Breast epithelium (tissue), 4 donors: ENCODE measurements at regions of chr14 and their contacts with region 1.

Region 1: GRCh38 chr14:90140298-90140955 is 78.6 kb downstream of the KCNK13 start:
- DNase-seq: no peak
- H3K4me3 ChIP-seq: no peak overlapping the region
- H3K27ac ChIP-seq: no peak overlapping the region
- H3K4me1 ChIP-seq: no peaks in the 10 kb centered on the region
- H3K27me3 ChIP-seq: no peaks in the 10 kb centered on the region
- CTCF ChIP-seq: no peak
- POLR2A ChIP-seq: no peak

Region 2: GRCh38 chr14:89207925-89208328 is 932.5 kb before region 1 on chr14:
- intact Hi-C with region 1: loop called (anchors 5 kb)
- DNase-seq: no peak
- H3K4me3 ChIP-seq: no peak overlapping the region
- H3K27ac ChIP-seq: no peak overlapping the region
- H3K4me1 ChIP-seq: no peaks in the 10 kb centered on the region
- H3K27me3 ChIP-seq: no peaks in the 10 kb centered on the region
- CTCF ChIP-seq: no peak
- POLR2A ChIP-seq: no peak

Region 3: GRCh38 chr14:90154110-90154509 is 13.7 kb after region 1 on chr14:
- intact Hi-C with region 1: no loop called
- DNase-seq: no peak
- H3K4me3 ChIP-seq: no peak overlapping the region
- H3K27ac ChIP-seq: no peak overlapping the region
- H3K4me1 ChIP-seq: no peaks in the 10 kb centered on the region
- H3K27me3 ChIP-seq: no peaks in the 10 kb centered on the region
- CTCF ChIP-seq: no peak
- POLR2A ChIP-seq: no peak